A673 (cell line): ENCODE measurements at regions of chr9 and their contacts with region 1.

Region 1: DNA sequence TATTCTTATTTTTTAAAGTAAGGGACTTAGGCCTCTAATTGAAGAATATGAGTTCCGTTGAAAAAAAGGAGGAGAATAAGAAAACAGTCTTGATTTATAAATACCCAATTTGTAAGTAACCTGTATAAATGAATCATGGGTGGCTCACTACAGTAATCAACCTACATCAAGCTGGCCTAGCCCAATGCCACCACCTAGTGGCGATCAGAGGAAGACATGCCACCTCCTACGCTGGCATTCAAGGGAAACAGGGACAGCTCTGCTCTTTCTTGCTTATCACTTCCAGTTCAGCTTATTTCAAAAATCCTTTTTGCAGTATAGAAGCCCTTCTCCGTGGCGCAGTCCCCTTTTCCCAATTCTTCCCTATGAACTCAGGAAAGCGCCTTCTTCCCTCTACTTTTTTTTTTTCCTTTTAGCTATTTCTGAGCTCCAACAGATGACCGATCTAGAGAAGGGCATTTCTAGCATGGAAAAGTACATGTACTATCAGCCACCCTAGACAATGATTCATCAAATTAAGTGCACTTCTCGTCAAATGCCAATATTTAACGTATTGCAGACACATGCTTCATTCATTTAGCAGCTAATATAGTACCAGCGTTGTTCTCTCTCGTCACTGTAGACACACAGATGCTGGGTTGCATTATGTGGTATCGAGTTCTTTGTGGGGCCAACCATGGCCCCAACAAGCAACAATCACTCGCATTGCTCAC is 28.3 kb downstream of the PTPN3 start:
- DNase-seq: peak; percentile 76
- H3K4me3 ChIP-seq: no peak overlapping the region
- H3K27ac ChIP-seq: no peak overlapping the region
- H3K4me1 ChIP-seq: no peaks in the 10 kb centered on the region
- H3K27me3 ChIP-seq: no peaks in the 10 kb centered on the region
- CTCF ChIP-seq: peak; percentile 89

Region 2: GRCh38 chr9:109062543-109062942 is 407.3 kb before region 1 on chr9:
- CTCF ChIA-PET with region 1: interaction called, 10 read pairs
- POLR2A ChIA-PET with region 1: no interaction called
- intact Hi-C with region 1: no loop called
- DNase-seq: no peak
- H3K4me3 ChIP-seq: no peak overlapping the region
- H3K27ac ChIP-seq: no peak overlapping the region
- H3K4me1 ChIP-seq: no peaks in the 10 kb centered on the region
- H3K27me3 ChIP-seq: no peaks in the 10 kb centered on the region
- CTCF ChIP-seq: no peak

Region 3: DNA sequence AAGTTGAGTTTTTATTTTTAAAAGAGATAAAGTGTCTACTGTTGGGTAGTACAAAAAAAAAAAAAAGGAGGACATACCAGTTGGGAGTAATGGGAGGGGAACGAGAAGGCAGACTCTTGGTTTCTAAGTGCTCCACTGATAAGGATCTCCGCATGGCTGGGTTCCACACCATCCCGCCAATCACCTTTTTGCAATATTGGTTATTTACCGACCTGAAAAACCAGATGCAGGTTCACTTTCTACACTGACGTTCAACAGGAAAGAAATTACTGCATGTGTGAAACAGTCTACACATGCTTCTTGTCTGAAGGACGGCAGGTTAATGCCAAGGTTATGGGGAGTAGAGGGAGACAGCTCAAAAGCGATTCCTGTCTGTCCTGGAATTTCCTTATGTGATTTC is 47.2 kb before region 1 on chr9:
- CTCF ChIA-PET with region 1: no interaction called
- POLR2A ChIA-PET with region 1: no interaction called
- intact Hi-C with region 1: no loop called
- DNase-seq: no peak
- H3K4me3 ChIP-seq: no peak overlapping the region
- H3K27ac ChIP-seq: no peak overlapping the region
- H3K4me1 ChIP-seq: no peaks in the 10 kb centered on the region
- H3K27me3 ChIP-seq: no peaks in the 10 kb centered on the region
- CTCF ChIP-seq: no peak

Region 4: GRCh38 chr9:109440797-109441287 is 29.0 kb before region 1 on chr9:
- CTCF ChIA-PET with region 1: interaction called, 18 read pairs
- POLR2A ChIA-PET with region 1: no interaction called
- intact Hi-C with region 1: loop called (anchors 1 kb)
- DNase-seq: peak; percentile 87
- H3K4me3 ChIP-seq: no peak overlapping the region
- H3K27ac ChIP-seq: no peak overlapping the region
- H3K4me1 ChIP-seq: no peaks in the 10 kb centered on the region
- H3K27me3 ChIP-seq: peaks cover 19% of the 10 kb centered on the region
- CTCF ChIP-seq: peak; percentile 86